ENCODE measurements at regions of chr15 and their contacts with region 1.

Region 1: DNA sequence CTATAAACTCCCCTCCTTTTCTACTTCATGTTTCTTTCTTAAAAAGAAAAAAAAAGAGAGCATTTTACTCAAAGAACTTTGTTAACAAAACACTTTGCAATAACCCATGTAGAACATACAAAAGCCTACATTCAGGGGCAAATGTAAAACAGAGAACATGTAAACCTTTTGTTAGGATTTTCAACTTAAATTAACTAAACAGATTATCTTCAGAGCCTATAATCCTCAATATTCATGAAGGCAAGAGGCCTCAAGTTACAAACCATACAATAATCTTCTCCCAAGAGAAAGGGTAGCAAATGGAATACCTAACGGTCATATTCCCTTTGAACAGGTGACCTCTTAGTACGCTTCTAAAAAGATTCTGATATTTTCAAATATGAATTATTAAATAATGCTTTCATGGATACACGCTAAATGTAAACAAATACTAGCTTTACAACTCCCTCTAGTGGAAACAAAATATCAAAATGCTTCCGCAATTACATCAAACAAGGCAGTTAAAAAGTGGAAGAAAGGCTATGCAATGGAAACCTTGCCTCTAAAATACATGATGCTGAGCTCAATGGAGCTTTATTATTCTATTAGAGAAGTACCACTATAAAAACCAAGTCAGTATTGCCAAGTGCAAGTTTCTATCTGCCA is 9.9 kb downstream of the CEP152 start:
- DNase-seq: no peak
- ATAC-seq: no peak
- H3K4me3 ChIP-seq: no peak overlapping the region
- H3K27ac ChIP-seq: no peak overlapping the region
- H3K4me1 ChIP-seq: no peaks in the 10 kb centered on the region
- H3K27me3 ChIP-seq: no peaks in the 10 kb centered on the region
- CTCF ChIP-seq: peak; percentile 36

Region 2: DNA sequence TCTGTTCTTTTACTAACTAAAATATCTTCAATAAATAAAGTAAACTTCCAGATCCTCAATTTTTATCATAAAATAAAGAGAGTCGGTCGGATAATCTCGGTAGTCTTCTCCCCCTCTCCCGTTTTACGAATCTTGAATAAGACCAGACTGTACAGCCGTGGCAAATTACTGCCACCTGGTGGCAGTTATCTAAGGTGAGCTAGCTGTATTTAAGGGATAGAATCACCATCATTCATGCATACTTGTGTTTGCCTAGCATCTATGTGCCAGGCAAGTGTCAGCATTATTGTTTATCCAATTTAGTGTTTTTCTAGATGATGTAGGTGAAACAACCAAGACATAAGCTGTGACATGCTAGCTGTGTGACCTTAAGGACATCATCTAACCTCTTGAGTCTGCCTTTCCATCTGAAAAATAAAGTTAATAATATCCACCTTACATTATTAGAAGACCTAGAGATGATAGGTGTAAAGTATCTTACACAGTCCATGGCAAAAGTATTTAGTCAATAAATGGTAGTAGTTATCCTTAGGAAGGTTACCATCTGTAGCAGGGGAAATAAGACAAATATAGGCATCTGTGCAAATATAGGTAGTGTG is 448.4 kb before region 1 on chr15:
- intact Hi-C with region 1: loop called (anchors 5 to 10 kb)
- DNase-seq: peak in 1 of 2 donors; percentile 27
- ATAC-seq: peak in 2 of 4 donors; percentile 75 to 79
- H3K4me3 ChIP-seq: no peak overlapping the region
- H3K27ac ChIP-seq: no peak overlapping the region
- H3K4me1 ChIP-seq: no peaks in the 10 kb centered on the region
- H3K27me3 ChIP-seq: peaks cover 0 to 3% (median 0%) of the 10 kb centered on the region in 3 donors
- CTCF ChIP-seq: peak; percentile 75

Region 3: DNA sequence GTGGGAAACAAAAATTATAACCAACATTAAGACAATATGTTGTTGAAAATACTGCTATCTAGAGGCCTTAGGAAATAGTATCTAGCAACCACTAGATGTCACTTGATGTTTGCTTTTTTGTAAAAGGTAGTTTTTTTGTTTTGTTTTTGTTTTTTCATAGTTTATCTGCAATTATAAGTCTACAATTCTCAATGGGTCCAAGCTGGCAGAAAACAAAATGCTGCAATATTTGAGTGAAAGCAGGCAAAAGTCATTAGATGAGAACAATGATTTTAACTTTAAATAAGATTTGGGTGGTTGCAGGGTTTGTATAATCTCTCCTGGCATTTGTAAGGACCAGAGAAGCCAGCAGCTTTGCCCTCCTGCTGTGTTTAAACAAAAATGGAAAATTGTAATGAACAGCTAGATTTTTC is 442.7 kb before region 1 on chr15:
- intact Hi-C with region 1: loop called (anchors 5 to 10 kb)
- DNase-seq: no peak
- ATAC-seq: peak in 1 of 4 donors; percentile 67
- H3K4me3 ChIP-seq: no peak overlapping the region
- H3K27ac ChIP-seq: no peak overlapping the region
- H3K4me1 ChIP-seq: no peaks in the 10 kb centered on the region
- H3K27me3 ChIP-seq: no peaks in the 10 kb centered on the region
- CTCF ChIP-seq: peak; percentile 52

Region 4: DNA sequence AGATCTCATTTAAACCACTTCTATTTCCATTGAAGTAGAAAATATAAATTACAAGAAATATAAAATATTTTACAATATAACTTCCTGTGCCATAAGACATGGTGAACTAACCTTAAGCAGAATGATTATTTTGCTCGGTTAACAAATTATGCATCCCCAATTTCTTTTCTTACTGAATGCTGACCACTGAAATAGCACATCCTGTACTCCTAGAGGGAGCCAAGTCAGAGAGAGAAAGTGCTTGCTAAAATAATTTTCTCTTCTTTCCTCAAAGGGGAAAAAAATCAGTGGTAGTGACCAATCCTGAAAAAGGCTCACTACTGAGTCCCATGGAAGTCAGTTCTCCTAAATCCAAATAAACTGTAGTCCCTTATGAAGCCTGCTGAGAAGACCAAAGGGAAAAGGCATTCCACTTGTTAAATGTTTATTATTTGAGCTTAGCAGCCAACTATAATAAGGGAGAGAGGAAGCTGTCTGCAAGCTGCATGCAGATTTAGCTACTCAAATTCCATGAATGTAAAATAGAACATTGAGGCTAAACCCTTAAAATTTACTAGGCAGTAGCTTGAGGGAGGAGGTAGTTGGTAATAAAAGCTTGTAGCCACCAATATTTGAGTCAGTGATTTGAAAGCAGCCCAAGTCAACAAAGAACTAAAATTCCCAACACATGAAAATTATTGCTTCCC is 23.1 kb before region 1 on chr15:
- intact Hi-C with region 1: loop called in 1 of 2 experiments (anchors 1 kb)
- DNase-seq: no peak
- ATAC-seq: no peak
- H3K4me3 ChIP-seq: no peak overlapping the region
- H3K27ac ChIP-seq: no peak overlapping the region
- H3K4me1 ChIP-seq: no peaks in the 10 kb centered on the region
- H3K27me3 ChIP-seq: no peaks in the 10 kb centered on the region
- CTCF ChIP-seq: no peak

Measured in psoas muscle (tissue), 8 donors.